Ovary (tissue), 10 donors: ENCODE measurements at regions of chr1 and their contacts with region 1.

Region 1: DNA sequence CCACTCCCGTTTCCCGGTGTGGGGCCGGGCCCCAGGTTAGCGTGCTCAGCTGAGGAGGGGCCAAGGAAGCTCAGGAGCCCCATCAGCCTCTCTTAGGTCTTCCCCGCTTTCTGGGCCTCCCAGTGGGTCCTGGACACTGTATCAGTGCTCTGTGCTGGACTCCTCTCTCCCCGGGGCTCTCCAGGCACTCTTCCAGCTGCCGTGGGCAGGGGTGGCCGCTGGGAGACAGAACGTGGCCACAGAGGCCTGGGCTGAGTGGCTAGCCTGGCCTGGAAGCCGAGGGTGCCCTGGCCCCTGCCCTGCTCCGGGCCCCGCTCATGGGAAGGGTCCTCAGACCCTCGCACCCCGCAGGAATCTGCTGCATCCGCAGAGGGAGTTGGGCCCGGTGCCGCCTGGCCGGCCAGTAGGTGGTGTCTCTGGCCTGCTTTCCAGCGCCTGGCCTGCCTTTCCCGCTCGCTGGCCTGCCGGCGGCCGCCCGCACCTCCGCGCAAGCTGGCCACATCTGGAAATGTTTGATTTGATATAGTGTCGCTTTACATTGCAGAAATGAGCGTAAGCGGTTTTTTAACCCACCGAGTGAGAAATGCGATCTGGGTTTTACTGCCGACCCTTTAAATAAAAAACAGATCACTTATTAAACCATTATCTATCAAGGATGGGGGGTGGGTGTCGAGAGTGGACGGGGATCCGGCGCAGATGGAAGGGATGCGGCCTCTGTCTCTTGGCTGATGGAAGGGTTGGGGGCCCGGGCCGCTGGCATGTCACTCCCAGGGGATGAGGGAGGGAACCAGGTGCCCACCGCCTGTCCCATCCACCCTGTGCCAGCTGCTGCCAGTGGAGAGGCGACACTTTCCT is 74.4 kb upstream of the TTC34 start:
- DNase-seq: peak in 4 of 5 donors; percentile 15 to 67 (median 48)
- H3K4me3 ChIP-seq: no peak overlapping the region
- H3K27ac ChIP-seq: no peak overlapping the region
- H3K4me1 ChIP-seq: peaks cover 5% of the 10 kb centered on the region
- H3K27me3 ChIP-seq: no peaks in the 10 kb centered on the region
- CTCF ChIP-seq: peak in 1 of 3 donors; percentile 49
- EP300 ChIP-seq: no peak
- POLR2A ChIP-seq: no peak

Region 2: GRCh38 chr1:3410142-3410925 is 534.4 kb after region 1 on chr1:
- intact Hi-C with region 1: loop called in 1 of 4 experiments (anchors 10 kb)
- DNase-seq: peak; percentile 58 to 83 (median 70)
- H3K4me3 ChIP-seq: no peak overlapping the region
- H3K27ac ChIP-seq: no peak overlapping the region
- H3K4me1 ChIP-seq: peaks cover 2% of the 10 kb centered on the region
- H3K27me3 ChIP-seq: no peaks in the 10 kb centered on the region
- CTCF ChIP-seq: peak; percentile 27 to 65 (median 50)
- EP300 ChIP-seq: no peak
- POLR2A ChIP-seq: no peak

Region 3: GRCh38 chr1:3423245-3423829 is 547.4 kb after region 1 on chr1:
- intact Hi-C with region 1: loop called in 2 of 4 experiments (anchors 5 to 10 kb)
- DNase-seq: no peak
- H3K4me3 ChIP-seq: no peak overlapping the region
- H3K27ac ChIP-seq: no peak overlapping the region
- H3K4me1 ChIP-seq: no peaks in the 10 kb centered on the region
- H3K27me3 ChIP-seq: no peaks in the 10 kb centered on the region
- CTCF ChIP-seq: no peak
- EP300 ChIP-seq: no peak
- POLR2A ChIP-seq: no peak